ENCODE measurements at regions of chr2 and their contacts with region 1.

Region 1: DNA sequence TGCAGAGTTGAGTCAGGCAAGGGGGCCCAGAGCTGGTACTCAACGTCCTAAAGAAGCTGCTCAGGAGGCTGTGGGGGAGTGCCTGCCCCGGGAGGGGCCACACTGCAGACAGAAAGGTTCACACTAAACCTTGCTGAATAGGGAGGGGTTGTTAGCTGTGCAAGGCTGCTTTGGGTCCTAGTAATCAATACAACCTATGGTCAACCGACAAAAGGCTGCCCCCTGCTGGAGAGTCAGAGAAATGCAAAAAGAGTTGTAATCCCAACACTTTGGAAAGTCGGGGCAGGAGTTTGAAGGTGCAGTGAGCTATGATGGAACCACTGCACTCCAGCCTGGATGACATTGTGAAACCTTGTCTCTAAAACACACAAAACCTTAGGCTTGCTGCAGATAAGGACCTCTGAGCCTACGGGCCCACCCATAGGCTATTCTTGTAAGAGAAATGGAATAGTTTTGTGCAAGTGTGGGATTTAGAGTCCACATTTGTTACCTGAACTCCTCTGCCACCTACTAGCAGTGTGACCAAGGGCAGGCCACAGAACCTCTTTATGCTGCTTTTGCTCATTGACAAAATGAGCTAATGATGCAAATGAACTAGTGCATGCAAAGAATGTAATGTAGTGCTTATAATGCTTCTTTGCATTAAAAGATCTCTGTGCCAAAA is 81.5 kb downstream of the PRPF40A start:
- DNase-seq: peak; percentile 58
- H3K4me3 ChIP-seq: no peak overlapping the region
- H3K27ac ChIP-seq: no peak overlapping the region
- H3K4me1 ChIP-seq: no peaks in the 10 kb centered on the region
- H3K27me3 ChIP-seq: no peaks in the 10 kb centered on the region
- CTCF ChIP-seq: peak; percentile 74 to 81
- POLR2A ChIP-seq: no peak

Region 2: DNA sequence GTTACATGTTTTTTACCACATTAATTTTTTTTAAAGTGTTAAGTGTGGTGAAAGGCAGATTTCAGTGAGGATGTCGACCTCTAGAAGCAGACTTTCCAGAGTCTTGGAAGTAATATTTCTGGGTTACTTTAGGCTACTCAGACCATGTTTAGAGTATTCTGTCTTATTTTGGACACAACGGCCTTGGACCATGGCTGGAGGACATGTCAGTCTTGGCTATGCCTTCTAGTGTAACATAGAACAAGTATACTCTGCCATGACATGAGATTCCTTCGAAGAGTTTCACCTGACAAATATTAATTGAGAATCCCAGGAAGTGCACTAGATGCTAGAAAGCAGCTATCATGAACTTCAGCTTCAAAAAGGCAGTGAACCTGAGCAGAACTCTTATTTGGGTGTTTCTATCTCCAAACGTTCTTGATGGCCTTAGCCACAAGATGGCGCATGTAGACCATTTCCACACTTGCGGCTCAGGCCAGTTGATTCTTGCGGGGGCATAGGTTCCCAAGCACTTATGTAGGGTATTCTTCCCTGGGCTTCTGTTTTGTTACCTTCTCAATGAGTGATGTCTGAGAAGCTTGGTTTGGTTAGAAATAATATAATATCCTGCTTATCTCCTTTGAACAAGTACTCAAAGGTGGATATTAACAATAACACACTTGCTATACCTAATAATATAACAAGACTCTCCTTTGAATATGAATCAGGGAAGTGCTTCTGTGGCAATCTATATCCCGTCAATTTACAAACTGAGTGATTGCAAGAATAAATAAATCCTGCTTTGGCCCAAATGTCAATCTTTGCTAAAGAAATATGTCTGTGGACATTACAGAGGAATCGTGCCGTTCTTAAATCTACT is 598.9 kb before region 1 on chr2:
- CTCF ChIA-PET with region 1: interaction called, 18 read pairs
- POLR2A ChIA-PET with region 1: no interaction called
- dilution Hi-C with region 1: no loop called
- intact Hi-C with region 1: loop called (anchors 1 kb)
- DNase-seq: peak; percentile 75
- H3K4me3 ChIP-seq: no peak overlapping the region
- H3K27ac ChIP-seq: no peak overlapping the region
- H3K4me1 ChIP-seq: peaks cover 3% of the 10 kb centered on the region
- H3K27me3 ChIP-seq: peaks cover 4% of the 10 kb centered on the region in 2 experiments
- CTCF ChIP-seq: peak; percentile 75 to 76
- POLR2A ChIP-seq: no peak

Region 3: GRCh38 chr2:152189622-152190495 is 445.9 kb before region 1 on chr2:
- CTCF ChIA-PET with region 1: interaction called, 20 read pairs
- POLR2A ChIA-PET with region 1: no interaction called
- dilution Hi-C with region 1: no loop called
- intact Hi-C with region 1: loop called (anchors 1 kb)
- DNase-seq: peak; percentile 71
- H3K4me3 ChIP-seq: no peak overlapping the region
- H3K27ac ChIP-seq: no peak overlapping the region
- H3K4me1 ChIP-seq: no peaks in the 10 kb centered on the region
- H3K27me3 ChIP-seq: no peaks in the 10 kb centered on the region
- CTCF ChIP-seq: peak; percentile 58 to 64
- POLR2A ChIP-seq: no peak

Region 4: DNA sequence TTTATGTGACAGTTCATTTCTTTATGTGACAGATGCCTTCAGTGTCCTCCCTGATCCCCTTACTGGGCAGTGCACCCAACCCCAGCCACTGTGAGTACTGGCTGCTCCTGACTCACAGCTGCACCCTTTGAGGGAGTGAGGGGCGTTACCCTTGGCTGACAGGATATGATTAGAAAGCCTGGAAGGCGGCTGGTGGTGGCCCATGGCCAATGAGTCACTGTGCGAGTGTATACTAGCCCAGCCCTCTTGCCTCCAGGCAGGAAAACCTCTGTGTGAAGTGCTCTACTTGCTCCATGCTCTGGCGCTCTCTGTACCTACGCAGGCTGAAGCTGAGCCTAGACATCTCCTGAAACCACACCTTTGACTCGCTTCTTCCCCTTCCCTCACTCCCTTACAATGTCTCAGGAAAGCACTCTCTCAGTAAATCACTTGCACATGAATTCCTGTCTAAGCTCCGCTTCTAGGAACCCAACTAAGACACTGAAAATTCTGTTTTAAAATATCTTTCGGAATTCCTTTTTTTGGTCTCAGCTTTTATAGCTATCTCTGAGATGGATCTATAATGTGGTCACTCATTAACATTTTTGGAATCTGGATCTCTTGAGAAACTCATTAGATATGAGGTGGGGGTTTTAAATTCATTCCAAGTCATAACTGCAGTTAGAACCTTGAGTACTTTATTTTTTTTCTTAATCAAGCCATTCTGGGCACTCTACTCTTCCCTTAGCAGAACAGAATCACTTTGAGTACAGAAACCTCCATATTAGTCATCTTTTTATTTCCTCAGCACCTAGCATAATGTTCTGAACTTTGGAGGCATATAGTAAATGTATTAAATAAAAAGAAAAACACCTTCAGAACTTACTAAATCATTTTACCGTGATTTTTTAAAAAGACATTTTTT is 435.0 kb before region 1 on chr2:
- CTCF ChIA-PET with region 1: interaction called, 14 read pairs
- POLR2A ChIA-PET with region 1: interaction called, 3 read pairs
- dilution Hi-C with region 1: no loop called
- intact Hi-C with region 1: no loop called
- DNase-seq: peak; percentile 97
- H3K4me3 ChIP-seq: peak overlapping the region in 1 of 3 experiments; percentile 9
- H3K27ac ChIP-seq: peak overlapping the region; percentile 69
- H3K4me1 ChIP-seq: peaks cover 15% of the 10 kb centered on the region
- H3K27me3 ChIP-seq: no peaks in the 10 kb centered on the region
- CTCF ChIP-seq: no peak
- POLR2A ChIP-seq: peak; percentile 76

Region 5: DNA sequence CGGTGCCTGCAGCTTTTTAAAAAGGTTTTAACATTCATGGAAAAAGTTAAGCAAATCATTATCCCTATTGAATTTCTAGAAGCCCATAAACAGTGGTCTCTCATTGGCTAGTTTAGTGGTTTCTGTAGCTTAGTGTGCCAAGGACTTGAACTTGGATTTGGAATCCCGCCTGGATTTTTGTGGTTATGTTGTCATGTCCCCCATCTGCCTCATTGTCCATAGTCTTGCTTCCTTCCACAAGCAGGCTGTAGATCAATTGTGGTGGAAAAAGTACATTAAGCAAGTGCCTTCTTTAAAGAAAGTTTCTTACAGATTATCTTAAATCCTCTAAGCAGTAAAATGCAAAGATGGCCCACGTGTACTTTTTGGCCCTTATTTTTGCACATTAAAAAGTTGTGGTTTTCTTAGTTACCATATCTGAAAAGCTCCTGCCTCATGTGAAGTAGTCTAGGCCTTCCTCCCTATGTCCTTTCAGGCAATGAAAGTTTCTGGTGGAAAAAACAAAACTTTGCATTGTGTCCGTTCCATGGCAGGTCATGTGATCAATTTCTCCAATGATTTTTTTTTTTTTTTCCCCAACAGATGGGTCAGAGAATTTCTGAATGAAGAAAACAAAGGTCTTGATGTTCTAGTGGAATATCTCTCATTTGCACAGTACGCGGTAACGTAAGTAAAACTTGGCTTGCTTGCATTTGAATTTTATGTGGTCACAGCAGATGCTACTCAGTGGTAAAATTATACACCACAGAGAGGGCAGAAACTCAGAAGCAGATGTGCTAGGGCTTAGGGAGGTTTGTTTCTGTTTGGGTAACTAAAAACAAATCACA is 77.4 kb before region 1 on chr2:
- CTCF ChIA-PET with region 1: interaction called, 11 read pairs
- POLR2A ChIA-PET with region 1: no interaction called
- dilution Hi-C with region 1: no loop called
- intact Hi-C with region 1: no loop called
- DNase-seq: no peak
- H3K4me3 ChIP-seq: no peak overlapping the region
- H3K27ac ChIP-seq: no peak overlapping the region
- H3K4me1 ChIP-seq: no peaks in the 10 kb centered on the region
- H3K27me3 ChIP-seq: no peaks in the 10 kb centered on the region
- CTCF ChIP-seq: no peak
- POLR2A ChIP-seq: no peak

Region 6: GRCh38 chr2:152620208-152620607 is 15.6 kb before region 1 on chr2:
- CTCF ChIA-PET with region 1: interaction called, 14 read pairs
- POLR2A ChIA-PET with region 1: no interaction called
- dilution Hi-C with region 1: no loop called
- intact Hi-C with region 1: no loop called
- DNase-seq: no peak
- H3K4me3 ChIP-seq: no peak overlapping the region
- H3K27ac ChIP-seq: no peak overlapping the region
- H3K4me1 ChIP-seq: no peaks in the 10 kb centered on the region
- H3K27me3 ChIP-seq: no peaks in the 10 kb centered on the region
- CTCF ChIP-seq: no peak
- POLR2A ChIP-seq: no peak

Region 7: DNA sequence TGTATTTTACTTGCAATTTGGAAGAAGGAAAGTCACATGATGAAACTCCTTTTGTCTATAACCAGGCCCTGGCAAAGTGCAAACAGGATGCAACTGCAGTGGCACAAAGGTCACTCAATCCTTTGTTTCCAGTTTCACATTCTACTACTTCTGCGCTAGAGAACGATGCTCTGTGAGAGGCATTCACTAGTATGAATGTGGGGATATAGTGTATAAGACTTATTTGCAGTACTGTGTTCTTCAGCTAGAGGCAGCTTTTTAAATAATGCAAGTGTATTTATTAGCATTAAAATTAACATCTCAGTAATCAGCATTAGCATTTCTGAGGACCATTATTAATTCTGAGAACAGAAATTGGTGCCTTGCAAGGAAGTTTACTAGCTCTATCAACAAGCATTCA is 12.6 kb after region 1 on chr2:
- CTCF ChIA-PET with region 1: interaction called, 30 read pairs
- POLR2A ChIA-PET with region 1: interaction called, 4 read pairs
- dilution Hi-C with region 1: no loop called
- intact Hi-C with region 1: no loop called
- DNase-seq: peak; percentile 57
- H3K4me3 ChIP-seq: no peak overlapping the region
- H3K27ac ChIP-seq: no peak overlapping the region
- H3K4me1 ChIP-seq: peaks cover 5% of the 10 kb centered on the region
- H3K27me3 ChIP-seq: no peaks in the 10 kb centered on the region
- CTCF ChIP-seq: peak in 1 of 2 donors; percentile 16
- POLR2A ChIP-seq: no peak

Region 8: DNA sequence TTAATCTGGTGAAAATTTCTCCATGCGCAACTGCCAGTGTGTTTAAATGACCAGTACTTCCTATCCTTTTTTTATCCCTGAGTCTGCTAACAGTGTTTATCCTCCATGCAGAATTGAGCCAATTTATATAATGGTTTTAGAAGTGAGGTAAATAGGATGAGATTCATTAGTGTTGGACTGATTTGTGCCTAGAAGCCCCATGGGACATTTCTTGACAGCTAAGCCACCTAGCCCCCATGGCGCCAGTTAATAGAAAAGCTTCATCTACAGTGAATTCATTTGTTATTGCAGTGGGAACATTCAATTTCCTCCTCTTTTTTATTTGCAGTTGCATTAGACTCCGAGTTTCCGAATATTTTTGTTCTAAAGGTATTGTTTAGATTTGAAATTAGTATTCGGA is 258.3 kb after region 1 on chr2:
- CTCF ChIA-PET with region 1: no interaction called
- POLR2A ChIA-PET with region 1: no interaction called
- dilution Hi-C with region 1: no loop called
- intact Hi-C with region 1: no loop called
- DNase-seq: no peak
- H3K4me3 ChIP-seq: no peak overlapping the region
- H3K27ac ChIP-seq: no peak overlapping the region
- H3K4me1 ChIP-seq: no peaks in the 10 kb centered on the region
- H3K27me3 ChIP-seq: no peaks in the 10 kb centered on the region
- CTCF ChIP-seq: no peak
- POLR2A ChIP-seq: no peak

Measured in endothelial cell of umbilical vein (primary cell).